Dorsolateral prefrontal cortex (tissue), 120 donors: ENCODE measurements at regions of chr9 and their contacts with region 1.

Region 1: DNA sequence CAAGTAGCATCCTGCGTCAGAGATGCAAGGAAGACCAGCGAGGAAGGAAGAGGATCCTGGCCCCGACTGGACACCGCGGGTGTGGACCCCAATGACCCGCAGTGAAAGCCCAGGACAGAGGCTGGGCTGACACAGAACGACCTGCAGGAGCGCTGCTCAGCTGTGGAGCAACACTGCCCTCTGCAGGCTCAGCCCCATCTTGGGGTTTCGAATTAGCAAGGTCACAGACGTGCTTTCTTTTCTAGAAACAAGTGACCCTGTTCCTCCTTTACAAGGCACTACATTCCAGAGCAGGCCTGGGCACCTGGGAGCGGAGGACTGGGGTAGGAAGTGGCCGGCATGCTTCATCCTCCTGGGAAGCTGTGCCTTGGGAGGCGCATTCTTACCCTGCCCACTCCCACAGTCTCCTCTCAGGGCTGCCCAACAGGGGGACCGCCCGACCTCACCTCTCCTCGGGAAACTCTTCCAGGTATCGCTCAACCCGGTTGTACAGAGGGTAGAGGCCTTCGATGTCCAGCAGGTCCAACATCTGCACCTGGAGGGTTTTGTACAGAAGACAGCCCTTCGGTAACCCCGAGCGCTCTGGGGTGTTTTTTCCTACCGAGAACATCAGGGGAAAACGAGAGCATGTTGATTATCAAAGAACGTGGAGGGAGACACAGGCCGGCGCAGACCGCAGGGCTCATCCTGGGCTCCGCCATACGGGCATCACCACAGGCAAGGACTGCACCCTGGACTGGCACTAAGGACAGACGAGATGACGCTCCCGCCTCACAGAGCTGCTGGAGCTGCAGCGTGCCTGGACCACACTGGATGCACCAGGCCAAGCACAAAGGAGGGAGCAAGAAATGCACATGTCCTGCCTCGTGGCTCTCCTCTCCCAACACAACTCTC is 35.0 kb downstream of the IPPK start:
- DNase-seq: peak; percentile 60 to 84 (median 72)
- H3K4me3 ChIP-seq: no peak overlapping the region
- H3K27ac ChIP-seq: peak overlapping the region in 22 of 59 donors; percentile 1 to 63 (median 40)
- H3K27me3 ChIP-seq: no peaks in the 10 kb centered on the region
- CTCF ChIP-seq: peak; percentile 71 to 98 (median 92)

Region 2: DNA sequence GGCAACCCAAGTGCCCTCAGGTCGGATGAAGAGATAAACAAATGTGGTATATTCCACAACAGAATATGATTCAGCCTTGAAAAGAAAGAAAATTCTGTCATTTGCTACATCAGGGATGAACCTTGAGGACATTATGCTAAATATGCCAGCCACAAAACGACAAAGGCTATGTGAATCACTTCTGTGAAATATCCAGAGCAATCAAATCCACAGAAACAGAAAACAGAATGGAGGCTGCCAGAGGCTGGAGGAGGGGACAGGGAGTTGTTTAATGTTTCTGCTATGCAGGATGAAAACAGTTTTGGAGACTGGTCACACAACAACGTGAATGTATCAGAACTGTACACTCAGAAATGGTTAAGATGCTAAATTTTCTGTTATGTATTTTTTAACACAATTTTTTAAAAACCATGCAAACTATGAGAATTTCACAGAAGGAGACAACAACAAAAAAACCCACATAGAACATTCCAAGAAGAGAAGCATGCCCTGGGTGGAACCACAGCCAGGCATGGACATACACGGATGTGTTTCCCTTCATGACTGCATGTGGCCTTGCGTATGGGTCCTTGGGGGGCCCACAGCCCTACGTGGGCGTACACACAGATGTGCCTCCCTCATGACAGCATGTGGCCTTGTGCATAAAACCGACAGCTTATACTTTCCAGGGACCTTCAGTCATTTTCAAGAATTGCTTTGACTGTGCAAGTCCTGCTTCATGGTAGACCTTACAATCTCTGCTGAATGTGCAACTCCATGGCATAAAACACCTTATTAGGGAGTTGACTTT is 831.6 kb before region 1 on chr9:
- intact Hi-C with region 1: no loop called
- DNase-seq: no peak
- H3K4me3 ChIP-seq: no peak overlapping the region
- H3K27ac ChIP-seq: no peak overlapping the region
- H3K27me3 ChIP-seq: peaks cover 0 to 5% (median 0%) of the 10 kb centered on the region in 45 donors
- CTCF ChIP-seq: no peak

Region 3: DNA sequence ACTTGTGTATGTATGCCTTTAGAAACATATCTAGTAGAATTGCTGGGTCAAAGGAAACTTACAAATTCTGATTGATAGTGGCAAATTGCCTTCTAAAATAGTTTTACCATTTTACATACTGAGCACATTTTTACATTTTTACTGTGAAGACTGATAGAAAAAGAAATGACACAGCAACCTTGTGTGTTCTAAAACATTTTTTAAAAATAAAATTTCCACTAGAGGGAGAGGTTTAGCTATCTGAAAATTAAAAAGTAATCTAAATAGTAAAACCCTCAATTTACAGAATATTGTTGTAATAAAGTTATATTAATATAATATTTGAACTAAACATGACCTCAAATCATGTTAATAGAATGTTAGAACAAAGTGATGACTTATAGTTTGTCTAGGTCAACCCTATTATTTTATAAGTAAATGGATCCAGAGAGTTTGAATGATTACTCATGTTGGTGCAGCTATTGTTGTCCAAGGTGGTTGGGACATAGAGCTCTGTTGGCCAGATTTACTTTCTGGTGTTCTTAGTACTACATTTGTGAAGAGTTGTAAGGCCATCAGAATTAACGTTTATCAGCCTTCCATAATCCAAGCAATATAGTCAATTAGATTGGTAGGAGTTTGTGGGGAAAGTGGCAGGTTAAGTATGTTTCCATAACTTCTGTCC is 292.0 kb before region 1 on chr9:
- intact Hi-C with region 1: loop called in 1 of 2 experiments (anchors 5 kb)
- DNase-seq: no peak
- H3K4me3 ChIP-seq: no peak overlapping the region
- H3K27ac ChIP-seq: peak overlapping the region in 5 of 59 donors; percentile 30 to 66 (median 64)
- H3K27me3 ChIP-seq: no peaks in the 10 kb centered on the region
- CTCF ChIP-seq: peak in 49 of 56 donors; percentile 16 to 66 (median 38)

Region 4: GRCh38 chr9:92438900-92439526 is 195.9 kb before region 1 on chr9:
- intact Hi-C with region 1: loop called in 1 of 2 experiments (anchors 5 kb)
- DNase-seq: no peak
- H3K4me3 ChIP-seq: no peak overlapping the region
- H3K27ac ChIP-seq: no peak overlapping the region
- H3K27me3 ChIP-seq: no peaks in the 10 kb centered on the region
- CTCF ChIP-seq: peak in 53 of 56 donors; percentile 21 to 67 (median 44)